ENCODE measurements at regions of chr3 and their contacts with region 1.

Region 1: GRCh38 chr3:170802164-170803151 is 67.5 kb downstream of the RPL22L1 start:
- DNase-seq: peak; percentile 80
- ATAC-seq: peak; percentile 88
- H3K4me3 ChIP-seq: no peak overlapping the region
- H3K27ac ChIP-seq: peak overlapping the region; percentile 75
- H3K4me1 ChIP-seq: peaks cover 33% of the 10 kb centered on the region
- H3K27me3 ChIP-seq: no peaks in the 10 kb centered on the region
- CTCF ChIP-seq: no peak

Region 2: DNA sequence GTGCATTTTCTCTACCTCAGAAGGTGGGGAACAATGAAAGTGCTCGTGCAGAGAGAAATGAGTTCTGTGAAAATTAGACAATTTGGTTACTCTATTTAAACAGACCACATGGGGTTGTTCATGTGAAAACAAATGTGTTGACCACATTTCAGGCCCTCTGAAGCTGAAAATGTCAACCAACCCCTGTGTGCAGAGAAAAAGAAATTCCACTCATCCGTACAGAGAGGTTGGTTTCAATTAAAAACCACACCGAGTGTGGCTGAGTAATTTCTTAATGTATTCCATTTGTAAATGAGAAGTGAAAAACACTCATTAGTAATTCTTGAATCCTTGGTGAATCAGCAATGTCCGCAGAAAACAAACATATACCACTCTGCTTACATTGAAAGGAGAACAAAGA is 169.7 kb before region 1 on chr3:
- CTCF ChIA-PET with region 1: no interaction called
- POLR2A ChIA-PET with region 1: no interaction called
- intact Hi-C with region 1: loop called (anchors 5 kb)
- DNase-seq: peak; percentile 22
- ATAC-seq: peak; percentile 43; the same call in 1 of the 2 replicates
- H3K4me3 ChIP-seq: no peak overlapping the region
- H3K27ac ChIP-seq: no peak overlapping the region
- H3K4me1 ChIP-seq: peaks cover 7% of the 10 kb centered on the region
- H3K27me3 ChIP-seq: no peaks in the 10 kb centered on the region
- CTCF ChIP-seq: no peak

Region 3: GRCh38 chr3:170651260-170651845 is 151.1 kb before region 1 on chr3:
- CTCF ChIA-PET with region 1: no interaction called
- POLR2A ChIA-PET with region 1: no interaction called
- intact Hi-C with region 1: no loop called
- DNase-seq: peak; percentile 10
- ATAC-seq: no peak
- H3K4me3 ChIP-seq: no peak overlapping the region
- H3K27ac ChIP-seq: no peak overlapping the region
- H3K4me1 ChIP-seq: no peaks in the 10 kb centered on the region
- H3K27me3 ChIP-seq: no peaks in the 10 kb centered on the region
- CTCF ChIP-seq: no peak

Region 4: DNA sequence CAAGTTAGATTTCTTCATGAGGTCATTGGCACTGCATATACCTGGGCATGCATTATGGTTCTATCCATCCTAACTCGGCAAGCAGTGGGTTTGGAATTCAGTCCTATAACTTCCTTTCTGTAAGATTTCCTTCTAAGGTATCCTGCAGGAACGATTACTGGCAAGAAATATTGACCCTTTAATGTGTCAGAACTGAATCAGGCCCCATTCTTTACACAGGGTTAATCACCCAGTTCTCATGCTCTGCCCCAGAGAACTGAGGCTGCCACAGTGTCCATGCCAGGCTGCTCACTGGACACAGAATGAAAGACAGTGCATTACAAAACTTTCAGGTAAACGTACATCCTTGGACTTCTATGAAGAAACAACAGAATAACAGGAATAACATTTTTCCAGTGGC is 41.4 kb before region 1 on chr3:
- CTCF ChIA-PET with region 1: interaction called, 3 read pairs
- POLR2A ChIA-PET with region 1: no interaction called
- intact Hi-C with region 1: loop called (anchors 1 kb)
- DNase-seq: peak; percentile 92
- ATAC-seq: peak; percentile 84
- H3K4me3 ChIP-seq: no peak overlapping the region
- H3K27ac ChIP-seq: peak overlapping the region; percentile 66
- H3K4me1 ChIP-seq: peaks cover 38% of the 10 kb centered on the region
- H3K27me3 ChIP-seq: no peaks in the 10 kb centered on the region
- CTCF ChIP-seq: no peak

Measured in PC-3 (cell line).